Right ventricle myocardium superior (tissue), 1 donor: ENCODE measurements at regions of chr11 and their contacts with region 1.

Region 1: DNA sequence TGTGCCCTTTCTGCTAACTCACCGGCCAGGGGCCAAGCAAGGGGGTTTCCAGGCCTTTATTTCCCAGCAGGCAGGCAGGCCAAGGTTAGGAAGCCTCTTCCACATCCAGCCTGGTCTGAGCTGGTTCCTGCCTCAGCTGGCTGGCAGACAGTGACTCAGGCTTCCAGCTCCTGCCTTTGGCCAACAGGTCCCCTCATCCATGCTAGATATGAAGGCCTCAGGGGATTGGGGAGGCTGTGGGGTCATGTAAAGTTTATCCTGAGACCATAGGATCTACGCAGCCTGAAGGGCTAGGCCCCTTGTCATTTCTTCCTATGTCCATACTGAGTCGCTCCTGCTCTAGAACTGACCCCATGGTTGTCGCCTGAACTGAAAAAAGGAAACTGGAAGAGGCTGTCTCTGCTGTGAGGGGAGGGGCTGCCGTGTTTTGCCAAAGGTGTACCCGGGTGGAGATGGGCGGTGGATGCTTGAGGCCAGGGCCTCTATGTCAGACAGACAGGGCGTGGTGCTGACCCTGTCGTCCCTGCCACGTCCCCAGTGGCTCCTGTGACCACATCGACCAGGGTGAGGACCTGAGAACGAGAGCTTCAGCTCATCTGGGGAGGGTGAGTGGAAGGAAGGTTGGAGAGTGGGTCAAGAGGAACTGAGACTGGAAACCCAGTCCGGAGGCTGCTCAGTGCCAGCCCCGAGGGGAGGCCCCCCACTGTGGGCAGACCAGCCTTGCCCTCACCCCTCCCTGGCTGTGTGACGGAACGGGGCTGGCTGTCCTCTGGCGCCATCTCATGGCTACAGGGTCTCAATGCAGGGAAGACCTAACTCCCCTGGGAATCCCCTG is 17.0 kb downstream of the P2RY6 start:
- DNase-seq: peak; percentile 81
- ATAC-seq: peak; percentile 86

Region 2: DNA sequence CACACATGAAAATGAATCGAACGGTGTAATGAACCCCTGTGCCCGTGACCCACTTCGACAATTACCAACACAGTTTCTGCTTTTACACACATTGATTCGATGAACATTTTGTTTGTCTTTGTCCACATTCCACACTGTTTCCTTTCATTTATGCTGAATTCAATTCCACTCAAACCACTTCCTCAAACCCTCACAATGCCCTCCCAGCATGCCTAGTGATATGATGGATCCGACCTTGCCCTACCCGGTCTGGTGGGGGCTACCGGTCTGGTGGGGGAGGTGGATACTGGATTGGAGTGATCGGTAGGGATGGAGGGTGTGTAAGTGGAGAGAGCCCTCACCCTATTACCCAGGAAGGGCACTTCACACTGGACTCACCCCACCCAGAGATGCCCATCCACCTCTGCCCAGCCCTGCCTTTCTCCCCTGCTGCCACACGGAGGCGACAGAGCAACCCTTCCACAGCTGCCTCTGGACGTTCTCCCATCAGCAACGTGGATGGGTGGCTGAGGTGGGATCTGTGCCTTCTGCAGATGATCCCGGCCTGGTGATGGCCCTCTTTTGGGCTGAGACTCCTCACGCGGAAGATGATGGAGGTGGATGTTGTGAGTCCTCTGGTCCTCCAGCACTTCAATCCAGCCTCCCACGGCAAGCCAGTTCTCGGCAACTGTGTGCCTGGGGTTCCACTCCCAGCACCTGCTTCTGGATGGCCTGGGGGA is 104.0 kb before region 1 on chr11:
- intact Hi-C with region 1: loop called (anchors 5 kb)
- DNase-seq: peak; percentile 78
- ATAC-seq: peak; percentile 59

Region 3: DNA sequence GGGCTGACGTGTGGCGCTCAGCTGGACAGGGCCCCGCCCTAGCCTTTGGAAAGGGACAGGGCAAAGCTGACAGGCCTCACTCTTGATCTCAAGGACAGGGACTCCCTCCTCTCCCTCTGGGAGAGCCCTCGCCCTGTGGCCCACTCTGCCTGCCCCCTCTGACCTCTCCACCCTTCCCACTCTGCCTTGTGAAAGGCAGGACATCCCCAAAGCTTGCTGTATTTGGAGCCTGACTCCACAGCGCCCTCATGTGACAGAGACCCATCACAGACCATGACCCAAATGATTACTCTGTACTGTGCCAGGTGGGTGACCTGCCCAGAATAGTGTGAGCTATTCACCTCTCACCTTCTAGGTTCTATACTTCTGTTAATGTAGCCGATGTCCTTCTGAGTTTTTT is 52.2 kb before region 1 on chr11:
- intact Hi-C with region 1: loop called (anchors 5 kb)
- DNase-seq: peak; percentile 62
- ATAC-seq: peak; percentile 52

Region 4: GRCh38 chr11:73414977-73415651 is 126.0 kb after region 1 on chr11:
- intact Hi-C with region 1: no loop called
- DNase-seq: no peak
- ATAC-seq: no peak